ENCODE measurements at regions of chr12 and their contacts with region 1.

Region 1: DNA sequence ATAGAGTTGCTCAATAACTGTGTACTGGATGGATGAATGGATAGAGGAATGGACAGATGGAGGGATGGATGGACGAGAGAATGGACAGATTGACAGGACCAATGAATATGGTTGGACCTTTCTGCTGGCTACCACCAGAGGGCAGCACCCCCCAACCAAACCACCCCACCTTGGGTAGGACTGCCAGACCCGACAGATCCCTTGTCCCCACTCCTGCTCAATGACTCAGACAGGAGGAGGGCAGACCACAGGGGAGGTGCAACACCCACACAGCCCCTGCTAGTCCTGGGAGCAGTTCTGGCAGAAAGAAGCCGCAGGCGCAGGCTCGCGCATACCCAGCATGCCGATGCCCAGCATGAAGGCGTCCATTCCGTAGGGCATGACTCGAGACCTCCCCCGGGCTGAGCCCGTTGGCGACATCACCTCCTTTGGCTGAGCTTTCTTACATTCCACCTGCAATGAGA is 12.4 kb downstream of the MSI1 start:
- DNase-seq: peak; percentile 70 to 78 (median 77)
- ATAC-seq: peak; percentile 91 to 98 (median 96)
- H3K4me3 ChIP-seq: no peak overlapping the region
- H3K27ac ChIP-seq: no peak overlapping the region
- H3K4me1 ChIP-seq: no peaks in the 10 kb centered on the region
- H3K27me3 ChIP-seq: no peaks in the 10 kb centered on the region
- CTCF ChIP-seq: peak; percentile 80 to 89 (median 88)
- POLR2A ChIP-seq: no peak

Region 2: GRCh38 chr12:120142231-120142877 is 214.2 kb before region 1 on chr12:
- intact Hi-C with region 1: no loop called
- DNase-seq: peak in 1 of 3 donors; percentile 32
- ATAC-seq: no peak
- H3K4me3 ChIP-seq: no peak overlapping the region
- H3K27ac ChIP-seq: no peak overlapping the region
- H3K4me1 ChIP-seq: no peaks in the 10 kb centered on the region
- H3K27me3 ChIP-seq: no peaks in the 10 kb centered on the region
- CTCF ChIP-seq: no peak
- POLR2A ChIP-seq: no peak

Region 3: DNA sequence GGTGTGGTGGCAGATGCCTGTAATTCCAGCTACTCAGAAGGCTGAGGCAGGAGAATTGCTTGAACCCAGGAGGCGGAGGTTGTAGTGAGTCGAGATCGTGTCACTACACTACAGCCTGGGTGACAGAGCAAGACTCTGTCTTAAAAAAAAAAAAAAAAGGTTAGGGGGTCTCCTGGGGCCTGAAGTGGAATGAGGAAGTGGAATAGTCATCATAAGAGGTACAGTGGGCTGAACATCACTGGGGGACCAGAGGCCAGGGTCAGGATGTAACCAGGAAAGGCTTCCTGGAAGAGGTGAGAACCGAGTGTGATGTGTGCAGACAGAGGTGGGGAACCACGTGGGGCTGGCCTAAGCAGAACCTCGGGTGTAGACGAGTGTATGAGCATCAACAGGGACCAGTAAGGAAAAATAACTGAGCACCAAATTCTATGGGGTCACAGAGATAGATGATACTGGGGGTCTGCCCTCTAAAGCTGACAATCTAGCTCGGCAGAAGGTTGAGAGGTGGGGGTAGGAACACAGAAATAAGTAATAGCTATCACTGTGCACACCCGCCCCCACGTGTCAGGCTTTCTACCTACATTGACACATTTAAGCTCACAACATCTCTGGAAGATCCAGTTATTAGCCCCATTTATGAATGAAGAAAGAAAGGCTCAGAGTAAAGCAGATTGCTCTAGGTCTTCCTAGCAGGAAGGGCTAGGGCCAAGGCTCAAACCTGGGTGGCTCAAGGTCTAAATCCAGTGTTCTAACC is 76.3 kb after region 1 on chr12:
- intact Hi-C with region 1: loop called (anchors 5 to 10 kb)
- DNase-seq: no peak
- ATAC-seq: no peak
- H3K4me3 ChIP-seq: no peak overlapping the region
- H3K27ac ChIP-seq: no peak overlapping the region
- H3K4me1 ChIP-seq: peaks cover 0 to 4% (median 0%) of the 10 kb centered on the region in 4 donors
- H3K27me3 ChIP-seq: no peaks in the 10 kb centered on the region
- CTCF ChIP-seq: no peak
- POLR2A ChIP-seq: no peak